Activated CD4-positive, alpha-beta T cell treated with anti-CD3 and anti-CD28 coated beads, Interleukin-2, amount 10 ng/mL, durations not matched to agents 24 days and 14 days (primary cell): ENCODE measurements at regions of chr9 and their contacts with region 1.

Region 1: DNA sequence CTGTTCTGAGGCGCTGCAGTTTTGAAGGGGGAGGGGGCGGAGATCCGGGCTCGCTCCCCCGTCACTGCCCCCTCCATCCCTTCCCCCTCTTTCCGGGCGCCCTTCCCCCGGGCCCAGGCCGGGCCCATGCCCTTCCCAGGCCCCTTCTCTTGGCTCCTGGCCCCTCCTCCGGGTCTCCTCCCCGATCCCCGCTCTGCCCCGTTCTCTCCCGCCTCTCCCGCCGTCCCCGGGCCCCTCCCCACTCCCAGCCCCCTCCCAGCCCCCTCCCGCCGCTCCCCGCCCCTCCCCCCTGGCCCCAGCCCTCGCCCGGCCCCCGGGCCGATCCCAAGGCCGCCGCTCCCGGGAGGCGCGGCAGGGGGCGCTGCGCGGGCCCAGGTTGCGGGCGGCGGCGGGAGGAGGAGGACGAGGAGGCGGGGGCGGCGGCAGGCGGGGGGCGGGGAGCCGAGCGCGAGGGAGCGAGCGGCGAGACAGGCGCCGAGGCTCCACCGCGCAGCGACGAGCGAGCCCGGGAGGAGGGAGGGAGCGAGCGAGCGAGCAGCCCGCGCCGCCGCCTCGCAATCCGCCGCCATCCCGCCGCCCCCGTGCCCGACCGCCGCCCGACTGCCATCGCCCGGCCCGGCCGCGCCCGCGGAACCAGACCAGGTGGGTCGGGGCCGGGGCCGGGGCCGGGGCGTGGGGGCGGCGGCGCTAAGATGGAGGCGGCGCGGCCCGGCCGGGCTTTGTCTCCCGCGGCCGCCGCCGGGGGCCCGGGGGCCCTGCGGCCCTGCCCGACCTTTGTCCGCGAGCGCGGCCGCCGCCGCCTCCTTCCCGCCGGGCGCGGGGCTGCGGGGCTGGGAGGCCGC is at the start of gene PRRC2B:
- DNase-seq: peak; percentile 95
- H3K4me3 Mint-ChIP-seq: peak within 1 kb of the TSS; percentile 91
- H3K27ac Mint-ChIP-seq: peak within 1 kb of the TSS; percentile 94
- H3K4me1 Mint-ChIP-seq: peaks cover 39% of the 10 kb centered on the region
- H3K27me3 Mint-ChIP-seq: peaks cover 5% of the 10 kb centered on the region
- total RNA-seq, gene PRRC2B: 114 and 128 TPM in 2 replicates

Region 2: GRCh38 chr9:131418143-131419028 is 24.5 kb after region 1 on chr9:
- intact Hi-C with region 1: loop called (anchors 2 kb)
- DNase-seq: no peak
- H3K4me3 Mint-ChIP-seq: peak overlapping the region; percentile 86
- H3K27ac Mint-ChIP-seq: peak overlapping the region; percentile 96
- H3K4me1 Mint-ChIP-seq: peaks cover 66% of the 10 kb centered on the region
- H3K27me3 Mint-ChIP-seq: no peaks in the 10 kb centered on the region

Region 3: DNA sequence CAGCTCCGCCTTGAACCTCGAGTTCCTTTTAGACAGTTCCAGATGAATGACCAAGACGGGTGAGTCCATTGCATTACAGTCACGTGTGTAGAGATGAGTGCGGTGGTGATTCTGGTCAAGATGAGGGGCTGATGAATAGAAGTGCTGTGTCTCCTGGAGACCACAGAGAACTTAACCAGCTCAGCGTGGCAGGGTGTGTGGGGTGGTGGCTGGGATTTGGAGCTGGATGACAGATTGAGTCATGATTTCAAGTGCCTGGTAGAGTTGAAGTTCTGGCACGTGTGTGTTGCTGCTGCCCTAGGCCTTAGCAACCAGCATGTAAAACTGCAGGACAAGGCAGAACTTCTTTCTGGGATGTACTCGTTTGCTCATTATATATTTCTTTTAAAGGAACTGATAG is 53.3 kb after region 1 on chr9:
- intact Hi-C with region 1: loop called (anchors 10 kb)
- DNase-seq: no peak
- H3K4me3 Mint-ChIP-seq: no peak overlapping the region
- H3K27ac Mint-ChIP-seq: peak overlapping the region; percentile 31
- H3K4me1 Mint-ChIP-seq: peaks cover 18% of the 10 kb centered on the region
- H3K27me3 Mint-ChIP-seq: no peaks in the 10 kb centered on the region